ENCODE measurements at regions of chr11 and their contacts with region 1.

Region 1: GRCh38 chr11:87110443-87111131 is 72.9 kb downstream of the TMEM135 start:
- DNase-seq: no peak
- H3K4me3 Mint-ChIP-seq: no peak overlapping the region
- H3K27ac Mint-ChIP-seq: no peak overlapping the region
- H3K4me1 Mint-ChIP-seq: no peaks in the 10 kb centered on the region
- H3K27me3 Mint-ChIP-seq: no peaks in the 10 kb centered on the region

Region 2: DNA sequence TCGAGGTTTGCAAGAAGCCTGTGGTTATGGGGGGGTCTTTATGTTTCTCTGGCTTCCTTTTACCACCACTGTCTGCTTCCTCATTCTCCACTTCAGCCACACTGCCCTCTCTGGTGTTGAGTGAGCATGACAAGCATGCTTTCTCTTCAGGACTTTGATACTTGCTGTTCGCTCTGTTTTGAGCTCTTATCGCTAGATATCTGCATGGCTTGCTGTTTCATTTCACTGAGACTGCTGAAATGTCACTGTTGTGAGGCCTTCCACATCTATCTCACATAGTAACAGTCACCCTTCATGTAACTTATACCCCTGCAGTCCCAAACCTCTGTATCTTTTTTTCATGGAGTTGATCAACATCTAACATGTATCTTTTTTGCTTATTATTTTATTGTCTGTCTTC is 13.0 kb before region 1 on chr11:
- CTCF ChIA-PET with region 1: interaction called, 10 read pairs
- DNase-seq: peak; percentile 41
- H3K4me3 Mint-ChIP-seq: no peak overlapping the region
- H3K27ac Mint-ChIP-seq: no peak overlapping the region
- H3K4me1 Mint-ChIP-seq: peaks cover 4% of the 10 kb centered on the region
- H3K27me3 Mint-ChIP-seq: no peaks in the 10 kb centered on the region

Region 3: GRCh38 chr11:87324817-87325489 is 214.4 kb after region 1 on chr11:
- CTCF ChIA-PET with region 1: no interaction called
- DNase-seq: no peak
- H3K4me3 Mint-ChIP-seq: no peak overlapping the region
- H3K27ac Mint-ChIP-seq: no peak overlapping the region
- H3K4me1 Mint-ChIP-seq: no peaks in the 10 kb centered on the region
- H3K27me3 Mint-ChIP-seq: no peaks in the 10 kb centered on the region